MCF 10A (cell line): ENCODE measurements at regions of chr17 and their contacts with region 1.

Region 1: DNA sequence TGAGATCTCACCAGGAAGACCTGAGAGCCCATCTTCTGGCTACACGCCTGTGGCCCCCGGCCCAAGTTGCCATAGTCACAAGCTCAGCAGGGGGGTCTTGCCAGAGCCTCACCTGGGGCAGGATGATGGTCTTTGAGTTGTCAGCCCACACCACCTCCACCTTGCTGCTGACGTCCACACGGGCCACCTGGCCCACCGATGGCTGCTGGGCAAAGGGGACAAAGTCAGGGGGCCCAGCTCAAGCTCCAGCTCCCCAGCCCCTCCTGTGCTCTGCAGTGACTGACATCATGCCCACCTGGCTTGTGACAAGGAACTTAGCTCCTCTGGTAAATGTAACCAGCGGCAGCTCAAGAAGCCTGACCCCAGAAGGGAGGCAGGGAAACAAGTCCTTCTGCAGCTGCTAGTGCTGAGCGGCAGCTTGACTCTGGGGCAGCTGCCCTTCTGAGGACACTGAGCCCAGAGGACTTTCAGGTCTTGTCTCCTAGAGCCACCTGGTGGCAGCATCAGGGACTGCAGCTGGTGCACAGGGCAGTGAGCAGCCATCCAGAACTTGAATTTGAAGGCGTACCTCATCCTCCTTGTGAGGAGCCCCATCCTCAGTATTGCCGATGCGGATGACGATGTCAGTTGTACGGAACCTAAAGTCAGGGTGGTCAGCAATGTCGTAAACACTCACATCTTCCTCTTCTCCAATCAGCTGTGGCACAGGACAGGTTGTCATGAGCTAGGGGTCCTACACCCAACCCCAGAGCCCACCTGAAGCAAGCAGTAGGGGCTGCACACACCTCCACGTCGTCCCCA is 13.5 kb downstream of the SPHK1 start:
- DNase-seq: peak; percentile 81
- H3K4me3 Mint-ChIP-seq: no peak overlapping the region
- H3K27ac Mint-ChIP-seq: no peak overlapping the region
- H3K4me1 Mint-ChIP-seq: peaks cover 5% of the 10 kb centered on the region
- H3K27me3 Mint-ChIP-seq: no peaks in the 10 kb centered on the region
- CTCF ChIP-seq: peak; percentile 95

Region 2: GRCh38 chr17:76296186-76296585 is 101.7 kb before region 1 on chr17:
- CTCF ChIA-PET with region 1: interaction called, 72 read pairs
- POLR2A ChIA-PET with region 1: no interaction called
- intact Hi-C with region 1: no loop called
- DNase-seq: no peak
- H3K4me3 Mint-ChIP-seq: no peak overlapping the region
- H3K27ac Mint-ChIP-seq: no peak overlapping the region
- H3K4me1 Mint-ChIP-seq: no peaks in the 10 kb centered on the region
- H3K27me3 Mint-ChIP-seq: no peaks in the 10 kb centered on the region
- CTCF ChIP-seq: no peak

Region 3: DNA sequence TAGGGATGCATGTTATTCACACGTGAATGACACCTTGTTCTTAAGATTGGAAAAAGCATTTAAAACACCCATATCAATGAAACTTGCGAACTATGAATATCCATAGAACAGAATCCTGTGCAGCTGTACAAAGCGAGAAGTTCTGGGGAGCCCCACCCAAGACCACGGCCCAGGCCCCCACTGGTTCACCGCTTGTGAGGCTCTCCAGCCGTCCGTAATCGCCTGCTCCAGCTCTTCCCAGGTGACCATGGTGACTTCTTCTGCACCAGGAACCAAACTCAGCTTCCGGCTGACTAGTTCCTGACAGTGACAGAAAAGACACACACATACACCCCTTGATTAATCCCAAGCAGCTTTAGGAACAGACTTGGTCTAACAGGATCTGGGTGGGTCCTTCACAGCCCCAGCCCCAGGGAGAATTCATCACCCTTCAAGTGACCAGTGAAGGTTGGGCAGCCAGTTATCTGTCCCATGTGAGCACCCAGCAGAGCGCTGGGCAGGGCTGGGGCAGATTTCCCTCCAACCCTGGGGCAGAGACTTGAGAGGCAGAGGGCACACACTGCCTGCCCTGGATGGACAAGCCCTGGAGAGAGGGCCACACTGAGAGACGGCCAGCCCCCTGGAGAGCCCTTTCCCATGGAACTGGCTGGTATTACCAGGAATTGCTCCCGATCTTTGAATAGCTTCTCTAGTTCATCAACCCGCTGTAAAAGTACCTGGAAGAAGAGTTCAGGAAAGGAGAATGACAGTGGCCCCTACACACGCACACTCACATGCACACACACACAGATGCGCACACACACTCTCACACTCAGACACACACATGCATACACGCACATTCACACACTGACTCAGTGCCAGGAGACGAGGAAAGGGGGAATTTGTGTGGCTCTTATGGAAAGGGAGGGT is 93.4 kb before region 1 on chr17:
- CTCF ChIA-PET with region 1: interaction called, 72 read pairs
- POLR2A ChIA-PET with region 1: interaction called, 3 read pairs
- intact Hi-C with region 1: no loop called
- DNase-seq: no peak
- H3K4me3 Mint-ChIP-seq: no peak overlapping the region
- H3K27ac Mint-ChIP-seq: no peak overlapping the region
- H3K4me1 Mint-ChIP-seq: no peaks in the 10 kb centered on the region
- H3K27me3 Mint-ChIP-seq: no peaks in the 10 kb centered on the region
- CTCF ChIP-seq: no peak

Region 4: DNA sequence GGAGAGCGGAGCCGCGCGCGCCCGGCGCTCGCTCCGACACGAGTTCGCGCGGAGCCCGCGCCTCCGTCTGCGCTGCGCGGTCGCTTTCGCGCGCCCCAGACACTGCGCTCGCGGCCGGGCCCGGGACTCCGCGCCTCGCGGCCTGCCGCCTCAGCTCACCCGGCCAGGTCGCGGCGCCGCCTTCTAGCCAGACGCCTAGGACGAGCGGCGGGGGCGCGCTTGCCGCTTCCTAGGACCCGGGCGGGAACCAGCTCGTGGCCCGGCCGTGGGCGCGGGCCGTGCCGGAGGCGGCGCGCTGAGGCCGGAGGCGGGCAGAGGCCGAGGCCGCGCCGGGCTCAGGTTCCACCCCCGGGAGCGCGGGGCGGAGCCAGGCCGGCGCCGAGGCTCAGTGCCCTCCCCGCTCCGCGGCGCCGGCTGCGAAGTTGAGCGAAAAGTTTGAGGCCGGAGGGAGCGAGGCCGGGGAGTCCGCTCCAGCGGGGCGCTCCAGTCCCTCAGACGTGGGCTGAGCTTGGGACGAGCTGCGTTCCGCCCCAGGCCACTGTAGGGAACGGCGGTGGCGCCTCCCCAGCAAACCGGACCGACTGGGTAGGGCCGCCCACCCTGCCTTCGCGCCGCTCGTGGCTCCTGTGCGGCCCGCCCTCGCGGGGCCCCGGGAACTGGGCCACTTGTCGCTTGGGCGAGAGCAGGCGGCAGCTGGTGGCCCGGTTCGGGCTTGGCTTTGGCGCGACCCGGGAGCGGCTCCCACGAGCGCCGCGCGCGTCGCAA is 13.5 kb before region 1 on chr17 and contains the start of gene SPHK1:
- CTCF ChIA-PET with region 1: interaction called, 71 read pairs
- POLR2A ChIA-PET with region 1: interaction called, 4 read pairs
- intact Hi-C with region 1: no loop called
- DNase-seq: peak; percentile 80
- H3K4me3 Mint-ChIP-seq: peak within 1 kb of the TSS; percentile 79
- H3K27ac Mint-ChIP-seq: no peak within 1 kb of the TSS
- H3K4me1 Mint-ChIP-seq: no peaks in the 10 kb centered on the region
- H3K27me3 Mint-ChIP-seq: no peaks in the 10 kb centered on the region
- CTCF ChIP-seq: no peak
- total RNA-seq, gene SPHK1: 7.1 and 12.6 TPM in 2 replicates

Region 5: DNA sequence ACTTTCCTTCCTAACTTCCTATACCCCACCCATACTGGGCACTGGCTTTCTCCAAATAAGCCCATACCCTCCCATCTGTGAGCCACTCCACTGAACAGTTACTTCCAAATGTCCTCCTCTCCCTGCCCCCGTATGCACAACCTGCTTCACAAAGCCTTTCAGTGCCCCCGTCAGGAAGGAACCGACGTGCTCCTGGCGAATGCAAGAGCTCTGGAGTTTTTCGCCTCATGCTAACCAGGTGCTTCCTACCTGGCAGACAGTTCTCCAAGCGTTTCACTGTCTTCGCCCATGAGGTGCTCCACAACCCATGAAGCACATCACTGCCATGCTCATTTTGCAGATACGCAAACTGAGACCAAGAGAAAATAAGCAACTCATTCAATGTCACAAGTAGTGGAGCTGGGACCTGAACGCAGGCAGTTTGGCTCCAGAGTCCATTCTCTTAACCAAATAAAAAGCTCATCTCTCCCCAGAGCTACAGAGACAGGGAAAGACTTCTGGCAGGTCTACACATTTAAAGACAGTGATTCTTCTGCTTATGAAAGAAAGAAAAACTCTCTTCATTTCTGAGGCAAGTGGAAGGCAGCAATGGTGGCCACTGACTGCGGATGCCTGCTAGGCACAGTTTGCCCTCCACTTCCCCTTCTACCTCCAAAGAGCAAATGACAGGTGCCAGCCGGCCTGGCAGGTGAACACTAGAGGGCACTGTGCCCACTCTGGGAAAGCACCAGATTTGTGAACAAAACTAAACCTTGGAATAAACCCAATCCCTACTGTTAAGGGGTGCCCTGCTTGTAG is 10.4 kb after region 1 on chr17:
- CTCF ChIA-PET with region 1: interaction called, 44 read pairs
- POLR2A ChIA-PET with region 1: no interaction called
- intact Hi-C with region 1: no loop called
- DNase-seq: peak; percentile 75
- H3K4me3 Mint-ChIP-seq: no peak overlapping the region
- H3K27ac Mint-ChIP-seq: no peak overlapping the region
- H3K4me1 Mint-ChIP-seq: no peaks in the 10 kb centered on the region
- H3K27me3 Mint-ChIP-seq: no peaks in the 10 kb centered on the region
- CTCF ChIP-seq: peak; percentile 75

Region 6: GRCh38 chr17:76414334-76415295 is 16.7 kb after region 1 on chr17:
- CTCF ChIA-PET with region 1: interaction called, 44 read pairs
- POLR2A ChIA-PET with region 1: no interaction called
- intact Hi-C with region 1: no loop called
- DNase-seq: no peak
- H3K4me3 Mint-ChIP-seq: no peak overlapping the region
- H3K27ac Mint-ChIP-seq: no peak overlapping the region
- H3K4me1 Mint-ChIP-seq: no peaks in the 10 kb centered on the region
- H3K27me3 Mint-ChIP-seq: no peaks in the 10 kb centered on the region
- CTCF ChIP-seq: no peak

Region 7: DNA sequence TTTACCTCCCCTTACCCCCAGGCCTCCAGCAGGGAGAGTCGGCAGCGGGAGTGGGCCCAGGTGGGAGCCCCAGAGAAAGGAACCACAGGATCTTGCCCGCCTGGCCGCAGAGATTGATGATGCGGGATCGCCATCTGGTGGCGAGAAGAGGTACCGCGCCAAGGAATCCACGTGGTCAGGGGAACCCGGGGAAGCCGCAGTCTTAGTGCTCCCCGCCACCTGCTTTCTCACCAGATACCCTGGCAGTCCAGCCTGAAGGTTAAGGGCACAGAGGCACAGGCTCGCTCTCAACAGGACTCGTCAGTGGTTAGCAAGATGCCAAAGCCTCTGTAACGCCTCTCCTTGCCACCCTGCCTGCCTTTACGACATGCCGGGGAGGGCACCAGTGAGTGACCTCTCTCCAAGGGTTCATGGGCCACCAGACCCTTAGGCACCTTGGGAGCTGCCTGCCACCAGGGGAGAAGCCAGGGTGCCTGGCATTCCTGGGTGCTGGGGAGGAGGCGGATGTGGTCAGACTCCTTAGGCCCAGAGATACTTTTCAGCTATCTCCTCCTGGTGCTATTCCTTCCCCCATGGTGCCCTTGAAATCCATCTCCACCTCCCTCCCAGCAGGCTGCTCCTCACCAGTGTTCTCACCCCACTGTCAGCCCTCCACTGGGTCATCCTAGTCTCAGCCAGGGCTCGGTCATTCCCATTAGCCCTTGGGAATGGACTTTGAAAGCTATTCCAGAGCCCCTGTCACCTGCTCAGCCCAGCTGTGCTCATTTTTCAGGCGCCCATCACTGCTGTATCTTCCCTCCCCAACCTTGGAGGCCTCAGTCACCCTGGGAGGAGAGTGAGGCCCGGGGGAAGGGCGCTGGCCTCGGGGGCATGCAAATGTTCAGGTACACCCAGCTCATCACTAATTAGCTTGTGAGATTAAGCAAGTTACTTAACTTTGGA is 108.8 kb after region 1 on chr17:
- CTCF ChIA-PET with region 1: interaction called, 11 read pairs
- POLR2A ChIA-PET with region 1: interaction called, 3 read pairs
- intact Hi-C with region 1: no loop called
- DNase-seq: peak; percentile 74
- H3K4me3 Mint-ChIP-seq: no peak overlapping the region
- H3K27ac Mint-ChIP-seq: no peak overlapping the region
- H3K4me1 Mint-ChIP-seq: peaks cover 8% of the 10 kb centered on the region
- H3K27me3 Mint-ChIP-seq: peaks cover 14% of the 10 kb centered on the region
- CTCF ChIP-seq: peak; percentile 92